Gastrocnemius medialis (tissue), 4 donors: ENCODE measurements at regions of chr22 and their contacts with region 1.

Region 1: GRCh38 chr22:34761111-34761510 is 304.8 kb upstream of the ISX start:
- DNase-seq: no peak
- ATAC-seq: no peak
- H3K4me3 ChIP-seq: no peak overlapping the region
- H3K27ac ChIP-seq: no peak overlapping the region
- H3K4me1 ChIP-seq: no peaks in the 10 kb centered on the region
- H3K27me3 ChIP-seq: no peaks in the 10 kb centered on the region
- CTCF ChIP-seq: no peak
- POLR2A ChIP-seq: no peak

Region 2: GRCh38 chr22:34866495-34867131 is 105.5 kb after region 1 on chr22:
- in situ Hi-C with region 1: loop called in 1 of 4 experiments (anchors 25 kb)
- intact Hi-C with region 1: no loop called
- DNase-seq: no peak
- ATAC-seq: no peak
- H3K4me3 ChIP-seq: no peak overlapping the region
- H3K27ac ChIP-seq: no peak overlapping the region
- H3K4me1 ChIP-seq: no peaks in the 10 kb centered on the region
- H3K27me3 ChIP-seq: no peaks in the 10 kb centered on the region
- CTCF ChIP-seq: no peak
- POLR2A ChIP-seq: no peak